ENCODE measurements at regions of chr12 and their contacts with region 1.

Region 1: GRCh38 chr12:31650927-31651326 is 8.6 kb upstream of the ETFBKMT start:
- DNase-seq: no peak
- H3K4me3 ChIP-seq: no peak overlapping the region
- H3K4me3 Mint-ChIP-seq: no peak overlapping the region
- H3K27ac ChIP-seq: no peak overlapping the region
- H3K27ac Mint-ChIP-seq: no peak overlapping the region
- H3K4me1 ChIP-seq: peaks cover 12% of the 10 kb centered on the region
- H3K4me1 Mint-ChIP-seq: peaks cover 6 to 12% (median 7%) of the 10 kb centered on the region in 4 donors
- H3K27me3 ChIP-seq: no peaks in the 10 kb centered on the region
- H3K27me3 Mint-ChIP-seq: peaks cover 0 to 2% of the 10 kb centered on the region in 2 donors

Region 2: GRCh38 chr12:31672521-31672920 is 21.6 kb after region 1 on chr12:
- CTCF ChIA-PET with region 1: interaction called, 15 read pairs
- POLR2A ChIA-PET with region 1: no interaction called
- intact Hi-C with region 1: no loop called
- DNase-seq: no peak
- H3K4me3 ChIP-seq: no peak overlapping the region
- H3K4me3 Mint-ChIP-seq: no peak overlapping the region
- H3K27ac ChIP-seq: no peak overlapping the region
- H3K27ac Mint-ChIP-seq: no peak overlapping the region
- H3K4me1 ChIP-seq: no peaks in the 10 kb centered on the region
- H3K4me1 Mint-ChIP-seq: no peaks in the 10 kb centered on the region
- H3K27me3 ChIP-seq: no peaks in the 10 kb centered on the region
- H3K27me3 Mint-ChIP-seq: no peaks in the 10 kb centered on the region

Region 3: DNA sequence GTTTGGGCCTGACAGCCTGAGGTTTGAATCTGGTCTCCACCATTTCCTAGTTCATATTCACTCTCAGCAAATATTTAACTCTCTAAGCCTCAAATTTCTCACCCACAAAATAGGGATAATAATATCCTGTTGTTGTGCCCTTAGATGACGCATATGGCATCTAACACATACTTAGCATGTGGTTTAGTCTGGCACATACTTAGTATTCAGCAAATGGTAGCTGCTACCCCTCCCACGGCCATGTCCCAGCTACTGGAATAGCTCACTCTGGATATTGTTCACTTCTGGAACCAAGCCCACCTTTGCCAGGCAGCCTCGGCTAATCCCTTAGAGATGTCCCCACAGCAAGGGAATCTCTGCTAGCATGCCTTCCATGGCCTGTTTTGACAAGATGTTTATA is 509.0 kb after region 1 on chr12:
- CTCF ChIA-PET with region 1: no interaction called
- POLR2A ChIA-PET with region 1: no interaction called
- intact Hi-C with region 1: no loop called
- DNase-seq: no peak
- H3K4me3 ChIP-seq: no peak overlapping the region
- H3K4me3 Mint-ChIP-seq: no peak overlapping the region
- H3K27ac ChIP-seq: no peak overlapping the region
- H3K27ac Mint-ChIP-seq: no peak overlapping the region
- H3K4me1 ChIP-seq: no peaks in the 10 kb centered on the region
- H3K4me1 Mint-ChIP-seq: peaks cover 0 to 2% (median 0%) of the 10 kb centered on the region in 4 donors
- H3K27me3 ChIP-seq: no peaks in the 10 kb centered on the region
- H3K27me3 Mint-ChIP-seq: no peaks in the 10 kb centered on the region

Region 4: GRCh38 chr12:32302218-32303173 is 651.6 kb after region 1 on chr12:
- CTCF ChIA-PET with region 1: interaction called, 42 read pairs
- POLR2A ChIA-PET with region 1: interaction called, 7 read pairs
- intact Hi-C with region 1: loop called (anchors 1 kb)
- DNase-seq: peak in 4 of 5 donors; percentile 6 to 18 (median 8)
- H3K4me3 ChIP-seq: no peak overlapping the region
- H3K4me3 Mint-ChIP-seq: no peak overlapping the region
- H3K27ac ChIP-seq: no peak overlapping the region
- H3K27ac Mint-ChIP-seq: peak overlapping the region in 2 of 7 donors; percentile 20 to 29
- H3K4me1 ChIP-seq: no peaks in the 10 kb centered on the region
- H3K4me1 Mint-ChIP-seq: peaks cover 0 to 4% (median under 1%) of the 10 kb centered on the region in 4 donors
- H3K27me3 ChIP-seq: no peaks in the 10 kb centered on the region
- H3K27me3 Mint-ChIP-seq: no peaks in the 10 kb centered on the region

Region 5: GRCh38 chr12:32312049-32312670 is 661.2 kb after region 1 on chr12:
- CTCF ChIA-PET with region 1: interaction called, 121 read pairs
- POLR2A ChIA-PET with region 1: interaction called, 9 read pairs
- intact Hi-C with region 1: loop called (anchors 1 kb)
- DNase-seq: peak in 4 of 5 donors; percentile 31 to 52 (median 38)
- H3K4me3 ChIP-seq: no peak overlapping the region
- H3K4me3 Mint-ChIP-seq: peak overlapping the region in 2 of 8 donors; percentile 14 to 65
- H3K27ac ChIP-seq: no peak overlapping the region
- H3K27ac Mint-ChIP-seq: peak overlapping the region in 1 of 7 donors; percentile 87
- H3K4me1 ChIP-seq: no peaks in the 10 kb centered on the region
- H3K4me1 Mint-ChIP-seq: peaks cover 3 to 9% (median 4%) of the 10 kb centered on the region in 4 donors
- H3K27me3 ChIP-seq: no peaks in the 10 kb centered on the region
- H3K27me3 Mint-ChIP-seq: no peaks in the 10 kb centered on the region